ENCODE measurements at regions of chr3 and their contacts with region 1.

Region 1: GRCh38 chr3:7800006-7800780 is 701.4 kb upstream of the LMCD1 start:
- DNase-seq: no peak
- ATAC-seq: no peak
- H3K4me3 ChIP-seq: no peak overlapping the region
- H3K27ac ChIP-seq: no peak overlapping the region
- H3K4me1 ChIP-seq: no peaks in the 10 kb centered on the region
- H3K27me3 ChIP-seq: peaks cover 0 to 4% (median 0%) of the 10 kb centered on the region in 9 donors
- CTCF ChIP-seq: peak in 8 of 12 donors; percentile 4 to 42 (median 19)
- POLR2A ChIP-seq: no peak

Region 2: GRCh38 chr3:7754653-7755441 is 45.3 kb before region 1 on chr3:
- intact Hi-C with region 1: no loop called
- DNase-seq: no peak
- ATAC-seq: no peak
- H3K4me3 ChIP-seq: no peak overlapping the region
- H3K27ac ChIP-seq: no peak overlapping the region
- H3K4me1 ChIP-seq: no peaks in the 10 kb centered on the region
- H3K27me3 ChIP-seq: no peaks in the 10 kb centered on the region
- CTCF ChIP-seq: no peak
- POLR2A ChIP-seq: no peak

Region 3: DNA sequence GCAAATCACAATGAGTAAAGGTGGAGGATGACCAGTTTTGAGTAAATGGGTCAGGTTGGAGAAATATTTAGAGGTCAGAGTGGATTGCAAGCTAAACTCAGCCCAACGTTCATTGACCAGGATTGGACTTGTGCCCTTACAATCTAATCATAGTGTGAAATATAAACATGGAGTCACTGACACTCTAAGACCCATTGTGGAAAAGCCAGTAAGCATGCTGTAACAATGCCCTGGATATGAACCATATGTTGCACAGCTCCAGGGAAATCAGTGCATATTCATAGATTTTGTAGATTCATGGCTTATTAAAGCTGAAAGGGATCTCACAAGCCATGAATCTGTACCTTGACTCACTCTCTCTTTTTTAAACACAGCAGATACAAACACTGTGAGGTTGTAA is 41.3 kb after region 1 on chr3:
- intact Hi-C with region 1: no loop called
- DNase-seq: no peak
- ATAC-seq: no peak
- H3K4me3 ChIP-seq: no peak overlapping the region
- H3K27ac ChIP-seq: no peak overlapping the region
- H3K4me1 ChIP-seq: no peaks in the 10 kb centered on the region
- H3K27me3 ChIP-seq: no peaks in the 10 kb centered on the region
- CTCF ChIP-seq: no peak
- POLR2A ChIP-seq: no peak

Region 4: DNA sequence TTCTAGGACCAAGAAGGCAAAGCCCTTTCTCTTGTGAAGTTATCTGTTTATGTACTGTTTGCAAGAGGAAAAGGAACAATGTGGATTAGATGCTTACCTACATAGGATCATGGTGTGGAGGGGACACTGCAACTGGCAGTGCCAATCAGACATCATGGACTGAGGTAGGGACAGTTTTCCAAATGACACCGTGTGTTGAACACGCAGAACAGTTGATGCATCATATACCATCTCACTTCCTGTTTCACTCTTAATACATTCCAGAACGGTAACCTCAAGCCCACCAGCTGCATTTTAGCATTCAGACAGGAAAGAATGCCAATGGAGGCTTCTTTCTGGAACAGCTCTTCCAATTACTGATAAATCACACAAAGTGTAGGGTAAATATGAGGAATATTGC is 303.8 kb after region 1 on chr3:
- intact Hi-C with region 1: loop called in 1 of 10 experiments (anchors 10 kb)
- DNase-seq: no peak
- ATAC-seq: no peak
- H3K4me3 ChIP-seq: no peak overlapping the region
- H3K27ac ChIP-seq: no peak overlapping the region
- H3K4me1 ChIP-seq: no peaks in the 10 kb centered on the region
- H3K27me3 ChIP-seq: no peaks in the 10 kb centered on the region
- CTCF ChIP-seq: no peak
- POLR2A ChIP-seq: no peak

Region 5: DNA sequence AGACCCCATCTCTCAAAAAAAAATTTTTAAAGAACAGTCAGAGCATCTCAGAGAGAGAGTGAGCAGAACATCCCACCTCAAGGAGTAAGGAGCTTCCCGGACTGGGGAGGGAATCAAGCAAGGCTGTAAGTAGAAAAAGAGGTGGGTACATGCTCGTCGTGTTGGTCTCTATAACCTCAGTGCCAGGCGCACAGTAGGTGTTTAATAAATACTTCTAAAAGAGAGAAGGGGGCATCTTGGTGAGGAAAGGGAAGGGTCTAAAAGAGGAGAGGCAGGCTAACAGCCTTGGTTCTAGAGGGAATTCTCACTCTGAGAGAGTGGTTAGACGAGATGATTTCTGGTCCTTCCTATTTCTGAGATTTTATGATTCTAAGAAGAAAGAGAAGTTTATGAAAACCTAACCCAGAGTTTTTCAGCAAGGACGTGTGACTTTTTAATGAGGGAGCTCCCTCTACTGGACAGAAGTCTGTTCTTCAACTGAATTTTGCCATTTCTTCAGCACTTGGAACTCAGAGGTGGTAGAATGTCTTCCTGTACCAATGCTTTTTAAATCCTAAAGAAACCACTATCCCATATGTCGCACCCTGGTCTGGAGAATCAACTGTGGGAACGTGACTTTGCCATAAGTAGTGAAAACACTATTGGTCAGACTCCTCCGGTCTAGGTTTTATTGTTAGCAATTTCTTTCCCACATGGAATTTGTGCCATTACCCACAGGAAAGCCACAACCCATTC is 501.7 kb after region 1 on chr3:
- intact Hi-C with region 1: loop called in 1 of 10 experiments (anchors 10 kb)
- DNase-seq: no peak
- ATAC-seq: no peak
- H3K4me3 ChIP-seq: no peak overlapping the region
- H3K27ac ChIP-seq: no peak overlapping the region
- H3K4me1 ChIP-seq: no peaks in the 10 kb centered on the region
- H3K27me3 ChIP-seq: no peaks in the 10 kb centered on the region
- CTCF ChIP-seq: peak; percentile 51 to 81 (median 68)
- POLR2A ChIP-seq: no peak